Panc1 (cell line): ENCODE measurements at regions of chr20 and their contacts with region 1.

Region 1: GRCh38 chr20:62065669-62066338 is at the start of gene TAF4:
- DNase-seq: no peak
- ATAC-seq: peak; percentile 79
- H3K4me3 ChIP-seq: peak within 1 kb of the TSS; percentile 52 to 63
- H3K27ac ChIP-seq: peak within 1 kb of the TSS; percentile 88
- H3K4me1 ChIP-seq: peaks cover 27% of the 10 kb centered on the region
- H3K27me3 ChIP-seq: no peaks in the 10 kb centered on the region
- CTCF ChIP-seq: no peak
- total RNA-seq, gene TAF4: 21.0 TPM

Region 2: GRCh38 chr20:62088237-62089127 is 22.7 kb after region 1 on chr20:
- CTCF ChIA-PET with region 1: no interaction called
- POLR2A ChIA-PET with region 1: interaction called, 9 read pairs
- in situ Hi-C with region 1: no loop called
- intact Hi-C with region 1: loop called (anchors 2 kb)
- DNase-seq: peak; percentile 97
- ATAC-seq: peak; percentile 99
- H3K4me3 ChIP-seq: no peak overlapping the region
- H3K27ac ChIP-seq: no peak overlapping the region
- H3K4me1 ChIP-seq: peaks cover 14% of the 10 kb centered on the region
- H3K27me3 ChIP-seq: no peaks in the 10 kb centered on the region; the same call in 1 of the 2 replicates
- CTCF ChIP-seq: no peak

Region 3: DNA sequence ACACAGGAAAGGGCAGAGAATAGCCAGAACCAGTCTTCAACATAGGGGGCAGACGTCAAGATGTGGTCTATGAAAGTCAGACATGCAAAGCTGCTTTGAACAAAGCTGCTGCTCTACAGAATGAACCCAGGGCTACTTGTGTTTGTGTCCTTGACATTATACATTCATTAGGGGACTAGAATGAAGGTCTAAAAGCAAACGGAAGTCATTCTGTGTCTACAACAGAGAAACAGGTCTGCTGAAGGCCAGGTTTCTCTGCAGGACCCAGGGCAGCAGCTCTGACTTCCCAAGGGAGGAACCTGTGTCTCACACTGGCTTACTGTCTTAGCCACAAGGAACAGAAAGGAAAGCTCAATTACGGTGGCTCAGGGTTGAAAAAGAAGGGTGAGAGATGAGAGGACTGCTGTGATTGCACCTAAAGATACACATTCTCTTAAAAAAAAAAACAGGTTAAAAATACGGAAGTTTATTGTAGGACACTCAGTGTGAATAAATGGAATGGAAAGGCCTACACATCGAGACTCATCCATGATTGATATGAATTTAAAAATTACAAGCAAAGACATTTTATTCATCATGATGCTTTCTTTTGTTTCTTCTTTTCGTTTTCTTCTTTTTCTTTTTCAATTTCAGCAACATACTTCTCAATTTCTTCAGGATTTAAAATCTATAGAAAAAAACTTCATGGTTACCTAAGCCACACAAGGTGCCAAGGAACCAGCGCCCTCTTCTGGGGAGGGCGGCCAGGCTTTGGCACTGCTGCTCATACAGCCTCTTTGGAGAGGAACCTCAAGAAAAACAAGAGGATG is 70.7 kb after region 1 on chr20:
- CTCF ChIA-PET with region 1: no interaction called
- POLR2A ChIA-PET with region 1: no interaction called
- in situ Hi-C with region 1: no loop called
- intact Hi-C with region 1: loop called (anchors 5 kb)
- DNase-seq: no peak
- ATAC-seq: peak; percentile 74
- H3K4me3 ChIP-seq: no peak overlapping the region
- H3K27ac ChIP-seq: no peak overlapping the region
- H3K4me1 ChIP-seq: peaks cover 7% of the 10 kb centered on the region; the same call in 1 of the 2 replicates
- H3K27me3 ChIP-seq: no peaks in the 10 kb centered on the region
- CTCF ChIP-seq: peak; percentile 95